ENCODE measurements at regions of chr7 and their contacts with region 1.

Region 1: DNA sequence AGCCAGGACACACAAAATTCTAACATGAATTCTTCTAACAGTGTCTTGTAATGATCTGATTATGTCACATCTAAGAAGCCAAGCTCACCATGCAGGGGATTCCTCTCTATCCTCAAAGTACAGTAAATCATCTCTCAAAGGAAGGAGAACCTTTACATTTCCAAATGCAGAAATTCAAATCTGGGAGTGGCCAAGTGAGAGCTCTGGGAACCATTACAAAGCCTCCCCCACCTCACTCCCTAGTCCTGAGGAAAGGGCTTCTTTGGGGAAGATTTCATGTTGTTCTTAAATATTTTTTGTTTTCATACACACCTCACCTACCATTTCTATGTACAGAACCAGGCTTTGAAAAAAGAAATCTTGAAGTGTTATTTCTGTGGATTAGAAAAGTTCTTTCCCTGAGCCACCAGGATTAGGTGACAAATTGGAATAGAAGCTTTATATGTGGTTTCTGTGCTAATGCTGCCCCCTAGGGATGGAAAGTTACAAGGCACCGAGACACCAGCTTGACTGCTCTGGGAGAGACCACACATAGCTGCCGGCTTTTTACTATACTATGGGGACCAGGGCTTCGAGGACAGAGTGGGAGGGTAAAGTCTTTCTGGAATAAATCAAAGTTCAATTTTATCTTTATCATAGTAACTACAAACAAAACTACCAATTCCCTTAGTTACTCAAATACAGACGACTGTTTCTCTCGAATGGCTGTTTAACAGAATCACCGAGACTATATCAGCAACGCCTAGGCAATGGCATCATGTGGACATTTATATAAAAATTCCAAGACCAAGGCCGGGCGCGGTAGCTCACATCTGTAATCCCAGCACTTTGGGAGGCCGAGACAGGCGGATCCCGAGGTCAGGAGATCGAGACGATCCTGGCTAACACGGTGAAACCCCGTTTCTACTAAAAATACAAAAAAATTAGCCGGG is 116.1 kb downstream of the RNF216 start:
- DNase-seq: peak; percentile 85
- ATAC-seq: peak; percentile 93
- H3K4me3 ChIP-seq: no peak overlapping the region
- H3K27ac ChIP-seq: no peak overlapping the region
- H3K4me1 ChIP-seq: no peaks in the 10 kb centered on the region
- H3K27me3 ChIP-seq: no peaks in the 10 kb centered on the region
- CTCF ChIP-seq: peak; percentile 92

Region 2: DNA sequence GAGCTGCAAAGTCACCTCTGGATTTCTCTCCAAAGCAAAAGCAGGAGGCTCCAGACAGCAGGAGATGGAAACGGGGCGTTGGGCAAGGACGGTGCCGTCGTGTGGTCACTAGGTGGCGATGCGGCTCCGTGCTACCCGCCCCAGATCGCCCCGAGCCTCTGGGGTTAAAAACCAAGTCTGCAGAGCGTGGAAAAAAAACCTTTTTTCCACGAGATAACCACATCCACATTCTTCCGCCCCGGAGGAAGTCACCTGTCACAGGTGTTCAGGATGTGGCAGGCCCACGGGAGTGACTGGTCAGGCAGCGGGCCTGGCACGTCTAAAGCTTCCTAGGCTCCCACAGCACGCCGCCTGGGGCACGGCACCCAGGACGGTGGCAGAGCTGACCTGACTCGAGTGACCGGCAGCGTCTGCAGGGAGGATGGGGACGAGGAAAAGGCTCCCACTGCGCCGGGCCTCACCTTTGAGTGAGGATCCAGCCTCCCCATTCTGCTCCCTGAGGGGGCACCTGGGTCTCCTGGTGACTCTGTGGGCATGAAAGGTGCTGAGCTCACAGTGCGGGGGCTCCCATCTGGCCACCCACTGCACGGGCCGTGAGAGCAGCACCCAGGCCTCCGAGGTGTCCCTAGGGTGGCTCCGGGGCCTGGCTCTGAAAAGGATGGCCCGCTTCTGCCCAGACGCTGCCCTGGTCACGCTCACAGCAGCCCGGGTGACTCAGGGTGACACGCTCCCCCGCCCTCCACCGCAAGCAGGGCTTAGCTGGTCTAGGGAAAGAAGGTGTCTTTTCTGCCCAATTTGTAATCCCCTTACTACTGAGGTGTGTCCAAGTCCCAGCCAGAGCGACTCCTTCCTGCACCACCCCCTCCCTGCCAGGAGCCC is 170.4 kb before region 1 on chr7:
- CTCF ChIA-PET with region 1: interaction called, 12 read pairs
- POLR2A ChIA-PET with region 1: no interaction called
- intact Hi-C with region 1: loop called (anchors 1 kb)
- DNase-seq: peak; percentile 83
- ATAC-seq: peak; percentile 79
- H3K4me3 ChIP-seq: peak overlapping the region; percentile 64
- H3K27ac ChIP-seq: peak overlapping the region; percentile 78
- H3K4me1 ChIP-seq: peaks cover 14% of the 10 kb centered on the region
- H3K27me3 ChIP-seq: no peaks in the 10 kb centered on the region
- CTCF ChIP-seq: peak; percentile 89

Region 3: GRCh38 chr7:5596046-5596895 is 69.1 kb before region 1 on chr7:
- CTCF ChIA-PET with region 1: interaction called, 6 read pairs
- POLR2A ChIA-PET with region 1: interaction called, 22 read pairs
- intact Hi-C with region 1: no loop called
- DNase-seq: peak; percentile 87
- ATAC-seq: peak; percentile 51
- H3K4me3 ChIP-seq: peak overlapping the region; percentile 97
- H3K27ac ChIP-seq: peak overlapping the region; percentile 93
- H3K4me1 ChIP-seq: peaks cover 51% of the 10 kb centered on the region
- H3K27me3 ChIP-seq: no peaks in the 10 kb centered on the region
- CTCF ChIP-seq: no peak

Region 4: DNA sequence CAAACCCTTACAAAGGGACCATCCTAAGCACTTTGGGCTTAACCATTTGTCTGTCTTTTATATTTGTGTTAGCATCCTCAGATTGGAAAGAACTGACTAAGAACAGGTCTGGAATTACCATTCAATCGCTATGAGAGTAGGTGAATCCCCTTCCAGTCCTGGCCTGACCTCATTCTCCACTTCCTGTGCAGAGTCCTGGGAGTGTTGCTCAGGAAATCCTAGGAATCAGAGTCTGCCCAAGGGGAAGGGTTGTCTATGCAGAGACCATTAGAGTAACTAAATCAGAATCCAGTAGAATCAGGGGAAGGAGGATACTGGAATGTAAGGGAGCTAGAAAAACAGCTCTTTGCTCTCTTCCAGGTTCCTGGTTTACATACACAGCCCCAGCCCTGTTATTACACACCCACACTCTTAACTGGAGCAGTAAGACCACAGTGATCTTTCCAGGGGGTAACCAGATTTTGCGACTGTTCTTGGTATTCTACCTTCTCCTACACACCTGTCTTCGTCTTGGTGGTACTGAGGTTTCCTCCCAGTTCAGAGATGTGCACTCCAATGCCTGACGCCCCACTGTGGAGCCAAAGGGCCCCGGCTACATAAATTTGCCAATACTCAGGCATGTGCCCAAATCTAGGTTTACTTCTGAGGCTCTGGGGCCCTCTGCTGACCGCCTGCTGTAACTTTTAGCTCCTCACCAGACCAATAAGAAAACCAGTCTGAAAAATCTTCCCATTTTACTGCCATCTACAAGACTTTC is 12.4 kb after region 1 on chr7:
- CTCF ChIA-PET with region 1: interaction called, 10 read pairs
- POLR2A ChIA-PET with region 1: no interaction called
- intact Hi-C with region 1: no loop called
- DNase-seq: peak; percentile 70
- ATAC-seq: peak; percentile 93
- H3K4me3 ChIP-seq: no peak overlapping the region
- H3K27ac ChIP-seq: no peak overlapping the region
- H3K4me1 ChIP-seq: peaks cover 8% of the 10 kb centered on the region
- H3K27me3 ChIP-seq: no peaks in the 10 kb centered on the region
- CTCF ChIP-seq: peak; percentile 82

Region 5: DNA sequence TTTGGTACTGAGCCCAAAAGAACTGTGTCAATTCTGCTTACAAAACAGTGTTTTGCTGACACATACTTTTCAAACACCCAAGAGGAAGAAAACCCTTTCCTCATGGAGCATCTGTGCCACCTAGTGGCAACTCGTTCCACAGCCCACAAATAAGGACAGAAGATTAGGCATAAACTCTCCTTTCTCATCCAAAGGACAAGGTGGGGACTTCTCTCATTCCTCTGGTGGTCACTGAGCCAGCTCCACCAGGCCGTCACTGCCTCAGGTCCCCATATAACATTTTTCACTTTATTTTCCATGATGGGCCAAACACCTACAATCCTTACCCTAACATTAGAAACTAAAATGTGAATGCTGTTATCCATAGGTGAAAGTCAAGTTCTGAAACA is 39.2 kb after region 1 on chr7:
- CTCF ChIA-PET with region 1: no interaction called
- POLR2A ChIA-PET with region 1: no interaction called
- intact Hi-C with region 1: loop called (anchors 1 kb)
- DNase-seq: peak; percentile 87
- ATAC-seq: peak; percentile 86
- H3K4me3 ChIP-seq: no peak overlapping the region
- H3K27ac ChIP-seq: no peak overlapping the region
- H3K4me1 ChIP-seq: peaks cover 17% of the 10 kb centered on the region
- H3K27me3 ChIP-seq: no peaks in the 10 kb centered on the region
- CTCF ChIP-seq: peak; percentile 94

Measured in PC-3 (cell line).